ENCODE measurements at regions of chr1 and their contacts with region 1.

Region 1: GRCh38 chr1:39387452-39387851 is 104.0 kb upstream of the BMP8A start:
- DNase-seq: no peak
- H3K4me3 ChIP-seq: no peak overlapping the region
- H3K27ac ChIP-seq: peak overlapping the region; percentile 35 to 66
- H3K4me1 ChIP-seq: peaks cover 0 to 74% (median 29%) of the 10 kb centered on the region in 4 donors
- H3K27me3 ChIP-seq: no peaks in the 10 kb centered on the region
- CTCF ChIP-seq: no peak

Region 2: DNA sequence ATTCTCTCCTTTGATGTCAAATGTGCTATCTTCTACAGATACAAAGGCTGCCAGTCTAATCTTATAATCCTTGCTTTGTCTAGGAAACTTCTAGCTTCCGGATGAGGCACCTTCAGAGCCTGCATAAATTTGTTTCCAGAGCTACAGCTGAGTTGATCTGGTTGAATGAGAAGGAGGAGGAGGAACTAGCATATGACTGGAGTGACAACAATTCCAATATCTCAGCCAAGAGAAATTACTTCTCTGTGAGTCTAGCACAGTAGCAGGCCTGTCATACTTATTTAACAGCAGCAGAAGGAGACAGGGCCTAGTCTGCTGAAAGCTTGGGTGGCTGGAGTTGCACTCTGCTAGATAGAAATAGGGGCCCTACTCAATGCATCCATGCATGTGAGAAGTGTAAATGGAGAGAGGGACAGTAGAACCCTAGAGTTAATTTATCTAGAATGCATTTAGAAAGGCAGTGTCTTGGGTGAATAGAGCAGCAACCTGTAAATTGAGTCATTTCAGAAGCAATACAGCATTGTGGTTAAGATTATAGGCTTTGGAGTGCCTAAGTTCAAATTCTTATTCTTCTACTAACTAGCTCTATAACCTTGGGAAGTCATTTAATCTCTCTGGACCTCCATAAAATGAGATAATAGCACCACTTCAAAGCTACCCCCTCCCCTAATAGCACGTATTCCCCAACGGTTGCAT is 93.9 kb before region 1 on chr1:
- intact Hi-C with region 1: no loop called
- DNase-seq: no peak
- H3K4me3 ChIP-seq: no peak overlapping the region
- H3K27ac ChIP-seq: no peak overlapping the region
- H3K4me1 ChIP-seq: peaks cover 0 to 13% (median 3%) of the 10 kb centered on the region in 4 donors
- H3K27me3 ChIP-seq: no peaks in the 10 kb centered on the region
- CTCF ChIP-seq: no peak

Region 3: DNA sequence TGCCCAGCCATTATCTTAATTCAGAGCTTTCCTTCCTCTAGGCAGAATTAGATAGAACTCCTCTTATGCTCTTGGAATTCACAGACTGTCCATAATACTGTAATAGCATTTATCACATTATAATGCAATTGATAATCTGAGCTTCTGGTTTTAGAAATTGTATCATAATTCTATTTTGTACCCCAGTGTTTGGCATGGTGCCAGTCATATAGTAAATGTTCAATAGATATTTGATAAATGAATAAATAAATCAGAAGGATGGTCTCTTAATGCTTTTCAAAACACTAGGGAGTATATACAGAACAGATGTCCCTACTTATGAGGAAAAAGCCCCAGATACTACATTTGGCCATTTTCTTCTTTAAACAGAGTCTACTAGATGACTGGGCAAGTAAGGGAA is 15.3 kb before region 1 on chr1:
- intact Hi-C with region 1: loop called (anchors 2 kb)
- DNase-seq: no peak
- H3K4me3 ChIP-seq: no peak overlapping the region
- H3K27ac ChIP-seq: peak overlapping the region in 1 of 2 donors; percentile 55
- H3K4me1 ChIP-seq: peaks cover 0 to 39% (median 18%) of the 10 kb centered on the region in 4 donors
- H3K27me3 ChIP-seq: no peaks in the 10 kb centered on the region
- CTCF ChIP-seq: no peak